CD14-positive monocyte (primary cell): ENCODE measurements at regions of chr11 and their contacts with region 1.

Region 1: GRCh38 chr11:68798221-68798813 is 43.4 kb downstream of the CPT1A start:
- DNase-seq: peak; percentile 5 to 24 (median 17)
- H3K4me3 ChIP-seq: no peak overlapping the region
- H3K4me3 Mint-ChIP-seq: no peak overlapping the region
- H3K27ac ChIP-seq: no peak overlapping the region
- H3K27ac Mint-ChIP-seq: peak overlapping the region in 3 of 7 donors; percentile 27 to 80 (median 46)
- H3K4me1 ChIP-seq: no peaks in the 10 kb centered on the region
- H3K4me1 Mint-ChIP-seq: no peaks in the 10 kb centered on the region
- H3K27me3 ChIP-seq: no peaks in the 10 kb centered on the region
- H3K27me3 Mint-ChIP-seq: no peaks in the 10 kb centered on the region
- CTCF ChIP-seq: peak; percentile 77

Region 2: DNA sequence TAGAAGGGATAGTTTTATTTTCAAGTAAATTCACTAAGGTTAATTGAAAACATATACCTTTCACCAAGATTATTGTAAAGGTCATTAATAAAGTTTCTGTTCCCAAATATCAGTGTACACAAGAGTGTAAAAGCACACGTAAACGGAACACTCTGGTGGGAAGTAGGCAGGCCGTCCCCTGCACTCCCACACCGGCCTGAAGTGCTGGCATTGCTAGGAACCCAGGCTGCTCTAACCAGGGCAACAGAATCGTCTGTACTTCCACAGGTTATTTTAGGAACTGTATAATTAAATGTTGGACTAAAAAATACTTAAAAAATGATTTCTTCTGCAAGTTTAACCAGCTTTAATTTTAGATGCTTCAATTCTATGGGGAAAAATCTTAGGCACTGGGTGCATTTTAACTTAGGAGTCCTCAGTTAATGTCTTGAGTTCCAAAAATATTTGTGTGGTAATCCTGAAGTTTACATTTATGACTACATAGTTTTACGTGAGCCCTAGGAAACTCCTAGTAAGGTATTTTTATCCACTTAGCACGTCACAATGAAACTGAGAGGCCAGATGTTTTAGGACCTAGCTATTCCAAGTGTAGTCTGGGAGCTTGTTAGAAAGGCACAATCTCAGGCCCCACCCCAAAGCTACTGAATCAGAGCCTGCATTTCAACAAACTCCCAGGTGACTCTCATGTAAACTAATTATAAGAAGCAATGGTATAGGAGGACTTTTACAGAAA is 616.4 kb before region 1 on chr11:
- intact Hi-C with region 1: no loop called
- DNase-seq: no peak
- H3K4me3 ChIP-seq: no peak overlapping the region
- H3K4me3 Mint-ChIP-seq: no peak overlapping the region
- H3K27ac ChIP-seq: no peak overlapping the region
- H3K27ac Mint-ChIP-seq: peak overlapping the region in 1 of 7 donors; percentile 26
- H3K4me1 ChIP-seq: no peaks in the 10 kb centered on the region
- H3K4me1 Mint-ChIP-seq: peaks cover 3% of the 10 kb centered on the region
- H3K27me3 ChIP-seq: no peaks in the 10 kb centered on the region
- H3K27me3 Mint-ChIP-seq: no peaks in the 10 kb centered on the region
- CTCF ChIP-seq: no peak

Region 3: DNA sequence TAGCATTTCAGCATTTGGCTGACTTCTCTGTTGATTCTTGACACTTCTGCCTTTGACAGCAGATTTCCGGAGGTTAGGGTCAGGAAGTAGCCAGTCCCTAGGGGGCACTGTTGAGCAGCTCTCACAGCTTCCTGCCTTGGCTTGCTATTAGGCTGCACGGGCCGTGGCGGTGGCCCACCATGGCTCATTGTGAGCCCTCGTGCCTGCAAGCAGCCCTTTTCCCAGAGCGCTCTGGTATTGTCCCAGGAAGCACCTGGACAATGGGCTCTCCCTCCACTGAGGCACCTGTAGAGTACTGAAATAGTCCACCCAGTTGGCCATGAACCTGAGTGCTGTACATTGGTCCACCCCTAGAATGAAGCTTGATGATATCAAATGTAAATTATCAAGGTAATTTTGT is 214.2 kb before region 1 on chr11:
- intact Hi-C with region 1: loop called in 1 of 2 experiments (anchors 10 kb)
- DNase-seq: peak; percentile 18 to 33 (median 21)
- H3K4me3 ChIP-seq: no peak overlapping the region
- H3K4me3 Mint-ChIP-seq: no peak overlapping the region
- H3K27ac ChIP-seq: peak overlapping the region in 1 of 2 donors; percentile 2
- H3K27ac Mint-ChIP-seq: peak overlapping the region in 1 of 7 donors; percentile 26
- H3K4me1 ChIP-seq: no peaks in the 10 kb centered on the region
- H3K4me1 Mint-ChIP-seq: no peaks in the 10 kb centered on the region
- H3K27me3 ChIP-seq: no peaks in the 10 kb centered on the region
- H3K27me3 Mint-ChIP-seq: peaks cover 0 to 1% (median 0%) of the 10 kb centered on the region in 3 donors
- CTCF ChIP-seq: peak; percentile 72

Region 4: DNA sequence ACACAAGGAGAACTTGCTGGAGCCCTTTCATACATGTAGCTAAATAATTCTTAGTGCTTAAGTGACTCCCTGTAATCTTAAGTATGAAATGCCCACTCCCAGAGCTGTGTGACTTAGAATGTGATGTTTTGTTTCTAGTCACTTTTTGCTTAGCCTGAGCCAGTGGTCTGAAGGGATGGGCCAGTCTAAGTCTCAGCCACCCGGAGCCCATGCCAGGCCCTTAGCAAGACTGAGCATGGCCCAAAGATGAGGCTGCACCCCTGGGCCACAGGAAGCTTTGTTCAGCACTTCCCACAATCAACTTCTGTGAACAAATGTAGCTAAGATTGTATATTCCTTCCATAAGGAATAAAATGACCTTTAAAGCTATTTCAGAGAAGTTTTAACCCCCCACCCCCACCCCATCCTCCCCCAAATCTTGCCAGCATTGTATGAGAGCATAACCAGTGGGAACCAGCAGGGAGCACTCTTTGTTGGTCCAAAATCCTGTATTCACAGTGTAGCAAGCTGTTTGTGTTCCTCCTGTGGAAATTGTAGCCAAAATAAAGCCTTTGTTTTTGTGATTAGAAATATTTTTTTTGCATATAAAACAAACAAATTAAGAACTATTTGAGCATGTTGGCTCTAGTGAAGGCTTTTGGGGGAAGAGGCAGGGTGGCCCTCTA is 187.7 kb before region 1 on chr11:
- intact Hi-C with region 1: loop called in 1 of 2 experiments (anchors 10 kb)
- DNase-seq: no peak
- H3K4me3 ChIP-seq: no peak overlapping the region
- H3K4me3 Mint-ChIP-seq: no peak overlapping the region
- H3K27ac ChIP-seq: peak overlapping the region in 1 of 2 donors; percentile 7
- H3K27ac Mint-ChIP-seq: peak overlapping the region in 1 of 7 donors; percentile 43
- H3K4me1 ChIP-seq: no peaks in the 10 kb centered on the region
- H3K4me1 Mint-ChIP-seq: no peaks in the 10 kb centered on the region
- H3K27me3 ChIP-seq: no peaks in the 10 kb centered on the region
- H3K27me3 Mint-ChIP-seq: no peaks in the 10 kb centered on the region
- CTCF ChIP-seq: no peak